GM10248 (cell line): ENCODE measurements at regions of chr6 and their contacts with region 1.

Region 1: DNA sequence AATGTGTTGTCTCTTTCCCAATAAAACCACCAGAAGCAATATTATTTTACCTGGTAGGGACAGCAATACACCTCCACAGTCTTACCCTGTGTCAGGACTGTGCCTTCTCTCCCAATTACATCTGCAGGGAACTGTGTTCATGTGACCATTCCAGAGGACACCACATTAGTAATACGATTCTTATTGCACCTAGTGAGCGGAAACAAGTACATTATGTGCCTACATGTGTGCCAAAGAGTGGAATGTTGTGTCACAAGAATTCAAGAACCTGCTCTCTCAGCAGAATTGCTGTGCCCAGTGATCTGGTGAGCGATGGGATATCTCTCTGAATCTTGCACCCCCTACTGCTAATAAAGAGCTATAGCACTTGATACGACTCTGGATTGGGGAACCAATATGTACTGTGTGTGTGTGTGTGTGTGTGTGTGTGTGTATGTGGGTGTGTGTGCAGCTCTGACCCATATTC is 57.4 kb upstream of the FOXC1 start:
- DNase-seq: no peak
- CTCF ChIP-seq: peak; percentile 29

Region 2: DNA sequence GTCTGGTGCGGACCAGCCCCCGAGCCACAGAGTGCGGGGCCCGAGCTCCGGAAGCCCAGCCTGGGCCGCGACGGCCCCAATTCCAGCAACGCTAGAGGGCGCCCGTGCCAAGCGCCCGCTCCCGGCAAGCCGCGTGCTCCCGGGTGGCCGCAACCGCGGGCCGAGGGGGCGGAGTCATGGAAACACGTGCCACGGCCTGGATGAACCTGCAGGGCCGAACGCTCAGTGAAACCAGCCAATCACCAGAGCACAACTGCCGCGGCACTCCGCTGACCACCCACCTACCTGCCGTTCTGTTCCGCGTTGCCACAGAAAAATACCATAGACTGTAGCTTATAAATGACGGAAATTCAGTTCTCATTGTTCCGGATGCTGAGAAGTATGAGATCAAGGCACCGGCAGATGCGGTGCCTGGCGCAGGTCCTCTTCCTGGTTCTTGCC is 28.3 kb before region 1 on chr6:
- CTCF ChIA-PET with region 1: interaction called, 13 read pairs
- POLR2A ChIA-PET with region 1: no interaction called
- DNase-seq: peak; percentile 78
- CTCF ChIP-seq: peak; percentile 50

Region 3: DNA sequence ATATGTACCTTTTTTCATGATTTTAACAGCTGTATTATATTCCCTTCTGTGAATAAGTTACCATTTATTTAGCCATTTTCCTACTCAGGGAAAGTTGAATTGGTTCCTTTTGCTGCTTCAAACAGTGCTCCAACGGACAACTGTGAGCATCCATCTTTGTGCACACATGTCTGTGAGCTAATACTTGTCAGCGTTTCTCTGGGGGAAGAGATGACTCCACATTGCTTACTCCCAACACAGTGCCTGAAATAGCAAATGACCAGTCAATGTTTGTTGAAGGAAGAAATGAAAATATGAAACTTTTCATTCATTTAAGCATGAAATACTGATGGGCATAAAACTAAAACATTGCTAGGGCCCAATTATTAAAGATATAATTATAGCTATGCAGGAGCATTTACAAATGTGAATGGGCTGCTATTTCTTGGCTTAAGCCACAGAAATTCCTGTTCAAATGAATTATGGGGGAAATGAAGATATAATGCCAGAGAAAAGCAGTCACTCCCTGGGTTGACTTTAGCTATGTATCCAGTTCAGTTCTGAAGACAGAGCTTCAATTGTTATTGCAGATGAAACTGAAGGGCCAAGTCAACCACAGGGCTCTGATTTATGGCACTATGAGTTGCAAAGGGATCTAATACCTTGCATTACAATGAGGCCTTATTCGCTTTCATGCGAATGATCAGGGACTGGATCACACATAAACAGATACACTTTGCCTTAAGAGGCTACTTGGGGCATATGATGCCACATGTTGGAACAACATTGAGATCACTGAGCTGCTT is 10.0 kb after region 1 on chr6:
- CTCF ChIA-PET with region 1: interaction called, 12 read pairs
- POLR2A ChIA-PET with region 1: no interaction called
- DNase-seq: no peak
- CTCF ChIP-seq: no peak

Region 4: DNA sequence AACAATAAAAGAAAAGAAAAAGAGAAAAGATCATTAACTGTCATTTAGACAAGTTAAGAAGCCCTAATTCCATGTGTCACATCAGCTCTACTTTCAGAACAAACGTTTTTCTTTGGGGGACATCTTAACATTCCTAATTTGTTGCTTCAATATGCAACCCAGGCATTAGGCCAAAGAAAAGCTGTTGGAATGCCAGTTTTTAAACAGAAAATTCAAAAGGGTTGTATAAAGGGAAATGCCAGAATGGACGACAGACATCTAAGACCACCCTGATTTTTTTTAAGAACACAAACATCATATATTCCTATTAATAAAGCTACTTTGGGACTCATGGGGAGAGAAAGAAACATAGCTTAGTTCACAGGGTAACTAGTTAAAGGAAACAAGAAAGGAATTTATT is 378.0 kb after region 1 on chr6:
- CTCF ChIA-PET with region 1: no interaction called
- POLR2A ChIA-PET with region 1: no interaction called
- DNase-seq: no peak
- CTCF ChIP-seq: no peak